CD4-positive, alpha-beta T cell (primary cell): ENCODE measurements at regions of chr13 and their contacts with region 1.

Region 1: DNA sequence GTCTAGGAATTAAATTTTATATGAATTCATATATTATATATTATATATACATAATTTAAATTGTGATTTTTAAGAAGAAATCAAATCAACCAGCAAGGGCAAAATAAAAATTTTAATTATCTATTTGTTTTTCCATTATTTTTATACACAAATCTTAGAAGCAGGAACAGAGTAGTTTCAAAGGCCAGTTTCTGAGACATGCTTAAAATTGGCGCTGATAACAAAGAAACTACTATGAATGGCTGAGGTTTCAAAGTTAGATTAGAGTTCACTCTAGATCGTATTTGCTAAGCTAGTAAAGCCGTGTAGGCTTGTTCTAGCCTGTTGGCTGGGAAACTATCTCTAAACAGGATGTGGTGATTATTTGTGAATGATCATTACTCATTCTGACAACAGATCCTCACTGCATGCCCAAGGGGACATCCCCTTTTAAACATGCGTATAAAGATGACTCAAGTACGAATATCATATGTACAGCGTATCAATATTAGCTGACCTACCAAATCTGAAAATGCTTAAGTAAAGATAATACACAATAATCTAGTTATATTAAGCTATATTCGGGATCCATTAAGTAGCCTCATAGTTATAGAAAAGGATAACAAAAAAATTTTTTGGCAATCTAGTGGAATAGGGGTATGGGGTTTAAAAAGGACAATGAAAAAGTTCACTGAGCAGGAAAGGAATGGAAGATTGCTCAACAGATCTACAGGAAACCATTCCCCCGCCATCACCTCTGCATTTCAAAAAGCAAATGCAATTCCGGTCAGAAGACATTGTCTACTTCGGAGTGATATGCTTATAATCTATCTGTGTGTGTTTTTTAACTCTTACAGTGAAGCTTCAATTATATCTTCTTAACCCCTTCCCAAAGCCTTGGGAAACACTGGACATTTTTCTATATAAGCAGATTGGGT is 150.1 kb downstream of the SHISA2 start:
- DNase-seq: peak in 8 of 14 experiments; percentile 16 to 90 (median 43)
- ATAC-seq: peak; percentile 91
- H3K4me3 ChIP-seq: no peak overlapping the region
- H3K4me3 Mint-ChIP-seq: peak overlapping the region; percentile 40
- H3K27ac ChIP-seq: peak overlapping the region in 1 of 2 donors; percentile 1
- H3K27ac Mint-ChIP-seq: no peak overlapping the region
- H3K4me1 ChIP-seq: peaks cover 62% of the 10 kb centered on the region
- H3K4me1 Mint-ChIP-seq: peaks cover 24% of the 10 kb centered on the region
- H3K27me3 ChIP-seq: no peaks in the 10 kb centered on the region
- H3K27me3 Mint-ChIP-seq: no peaks in the 10 kb centered on the region
- CTCF ChIP-seq: no peak

Region 2: DNA sequence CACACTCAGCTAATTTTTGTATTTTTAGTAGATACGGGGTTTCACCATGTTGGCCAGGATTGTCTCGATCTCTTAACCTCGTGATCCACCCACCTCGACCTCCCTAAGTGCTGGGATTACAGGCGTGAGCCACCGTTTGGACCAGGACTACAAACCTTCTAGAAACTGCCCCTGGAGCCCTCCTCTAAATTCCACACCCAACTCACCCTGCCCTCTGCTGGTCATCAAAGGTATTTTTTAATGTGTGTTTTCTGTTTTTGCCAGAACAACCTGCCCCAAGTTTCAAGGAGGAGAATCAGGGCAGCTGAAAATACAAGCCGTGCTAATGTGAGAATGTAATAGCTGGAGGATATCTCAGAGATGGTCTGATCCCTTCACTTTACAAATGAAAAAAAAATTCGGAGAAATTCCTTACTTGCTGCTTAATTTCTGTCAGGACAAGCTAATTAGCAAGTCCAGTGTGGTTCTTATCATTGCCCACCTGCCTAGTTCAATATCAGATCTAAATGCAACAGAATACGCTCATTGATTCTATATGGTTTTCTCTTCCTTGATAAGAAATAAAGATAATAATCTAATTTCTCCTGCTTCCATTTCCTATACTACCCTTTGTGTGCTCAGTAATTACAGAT is 525.9 kb before region 1 on chr13:
- CTCF ChIA-PET with region 1: no interaction called
- POLR2A ChIA-PET with region 1: no interaction called
- intact Hi-C with region 1: no loop called
- DNase-seq: peak in 10 of 14 experiments; percentile 1 to 65 (median 16)
- ATAC-seq: peak; percentile 48
- H3K4me3 ChIP-seq: no peak overlapping the region
- H3K4me3 Mint-ChIP-seq: no peak overlapping the region
- H3K27ac ChIP-seq: no peak overlapping the region
- H3K27ac Mint-ChIP-seq: no peak overlapping the region
- H3K4me1 ChIP-seq: peaks cover 6% of the 10 kb centered on the region
- H3K4me1 Mint-ChIP-seq: peaks cover 7% of the 10 kb centered on the region
- H3K27me3 ChIP-seq: peaks cover 37 to 38% of the 10 kb centered on the region in 2 experiments
- H3K27me3 Mint-ChIP-seq: peaks cover 58% of the 10 kb centered on the region
- CTCF ChIP-seq: peak; percentile 74

Region 3: GRCh38 chr13:25847145-25847544 is 54.6 kb before region 1 on chr13:
- CTCF ChIA-PET with region 1: no interaction called
- POLR2A ChIA-PET with region 1: interaction called, 6 read pairs
- intact Hi-C with region 1: loop called (anchors 5 to 10 kb)
- DNase-seq: peak in 4 of 14 experiments; percentile 22 to 78 (median 60)
- ATAC-seq: peak; percentile 76
- H3K4me3 ChIP-seq: peak overlapping the region; percentile 26
- H3K4me3 Mint-ChIP-seq: peak overlapping the region; percentile 46
- H3K27ac ChIP-seq: peak overlapping the region; percentile 25 to 52
- H3K27ac Mint-ChIP-seq: peak overlapping the region; percentile 83
- H3K4me1 ChIP-seq: peaks cover 21% of the 10 kb centered on the region
- H3K4me1 Mint-ChIP-seq: peaks cover 35% of the 10 kb centered on the region
- H3K27me3 ChIP-seq: no peaks in the 10 kb centered on the region
- H3K27me3 Mint-ChIP-seq: no peaks in the 10 kb centered on the region
- CTCF ChIP-seq: no peak

Region 4: DNA sequence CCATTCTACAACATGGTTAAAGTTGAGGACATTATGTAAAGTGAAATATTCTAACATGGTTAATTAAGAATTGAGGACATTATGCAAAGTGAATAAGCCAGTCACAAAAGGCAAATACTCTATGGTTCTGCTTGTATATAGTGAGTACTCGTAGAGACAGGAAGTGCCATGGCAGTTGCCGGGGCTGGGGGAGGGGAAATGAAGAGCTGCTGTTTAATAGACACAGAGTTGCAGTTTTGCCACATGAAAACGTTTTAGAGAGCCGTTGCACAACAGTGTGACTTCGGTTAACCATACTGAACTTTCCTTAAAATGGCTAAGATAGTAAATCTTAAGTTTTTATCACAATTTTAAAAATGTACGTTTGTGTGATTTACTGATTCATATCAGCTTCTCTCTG is 26.8 kb before region 1 on chr13:
- CTCF ChIA-PET with region 1: no interaction called
- POLR2A ChIA-PET with region 1: interaction called, 6 read pairs
- intact Hi-C with region 1: loop called in 1 of 2 experiments (anchors 2 kb)
- DNase-seq: peak; percentile 46 to 81 (median 66)
- ATAC-seq: peak; percentile 95
- H3K4me3 ChIP-seq: no peak overlapping the region
- H3K4me3 Mint-ChIP-seq: peak overlapping the region; percentile 22
- H3K27ac ChIP-seq: peak overlapping the region; percentile 31 to 47
- H3K27ac Mint-ChIP-seq: peak overlapping the region; percentile 78
- H3K4me1 ChIP-seq: peaks cover 39% of the 10 kb centered on the region
- H3K4me1 Mint-ChIP-seq: peaks cover 76% of the 10 kb centered on the region
- H3K27me3 ChIP-seq: no peaks in the 10 kb centered on the region
- H3K27me3 Mint-ChIP-seq: no peaks in the 10 kb centered on the region
- CTCF ChIP-seq: no peak

Region 5: GRCh38 chr13:25920277-25920676 is 18.6 kb after region 1 on chr13:
- CTCF ChIA-PET with region 1: no interaction called
- POLR2A ChIA-PET with region 1: no interaction called
- intact Hi-C with region 1: no loop called
- DNase-seq: no peak
- ATAC-seq: no peak
- H3K4me3 ChIP-seq: no peak overlapping the region
- H3K4me3 Mint-ChIP-seq: no peak overlapping the region
- H3K27ac ChIP-seq: no peak overlapping the region
- H3K27ac Mint-ChIP-seq: no peak overlapping the region
- H3K4me1 ChIP-seq: peaks cover 6% of the 10 kb centered on the region
- H3K4me1 Mint-ChIP-seq: peaks cover 6% of the 10 kb centered on the region
- H3K27me3 ChIP-seq: no peaks in the 10 kb centered on the region
- H3K27me3 Mint-ChIP-seq: no peaks in the 10 kb centered on the region
- CTCF ChIP-seq: no peak

Region 6: DNA sequence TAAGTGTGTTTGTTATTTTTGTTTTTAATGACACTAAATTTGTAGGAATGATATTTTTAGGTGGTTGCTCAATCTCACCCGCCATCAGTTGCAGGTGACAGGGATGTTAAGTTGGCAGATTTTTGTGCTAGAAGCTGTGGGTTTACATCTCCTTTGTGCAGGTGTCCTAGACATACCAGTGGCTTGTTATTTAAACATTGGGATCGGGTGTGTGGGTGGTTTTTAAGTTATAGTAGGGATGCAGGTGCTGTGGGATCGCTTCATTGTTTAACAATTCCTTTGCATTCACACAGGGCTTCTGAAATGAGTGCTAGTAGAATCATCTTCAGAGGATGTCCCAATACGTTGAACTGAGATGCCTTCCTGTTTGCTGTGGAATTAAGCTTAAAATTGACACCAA is 50.1 kb after region 1 on chr13:
- CTCF ChIA-PET with region 1: no interaction called
- POLR2A ChIA-PET with region 1: no interaction called
- intact Hi-C with region 1: loop called in 1 of 2 experiments (anchors 5 kb)
- DNase-seq: no peak
- ATAC-seq: no peak
- H3K4me3 ChIP-seq: no peak overlapping the region
- H3K4me3 Mint-ChIP-seq: no peak overlapping the region
- H3K27ac ChIP-seq: no peak overlapping the region
- H3K27ac Mint-ChIP-seq: no peak overlapping the region
- H3K4me1 ChIP-seq: peaks cover 13% of the 10 kb centered on the region
- H3K4me1 Mint-ChIP-seq: peaks cover 11% of the 10 kb centered on the region
- H3K27me3 ChIP-seq: no peaks in the 10 kb centered on the region
- H3K27me3 Mint-ChIP-seq: no peaks in the 10 kb centered on the region
- CTCF ChIP-seq: no peak

Region 7: DNA sequence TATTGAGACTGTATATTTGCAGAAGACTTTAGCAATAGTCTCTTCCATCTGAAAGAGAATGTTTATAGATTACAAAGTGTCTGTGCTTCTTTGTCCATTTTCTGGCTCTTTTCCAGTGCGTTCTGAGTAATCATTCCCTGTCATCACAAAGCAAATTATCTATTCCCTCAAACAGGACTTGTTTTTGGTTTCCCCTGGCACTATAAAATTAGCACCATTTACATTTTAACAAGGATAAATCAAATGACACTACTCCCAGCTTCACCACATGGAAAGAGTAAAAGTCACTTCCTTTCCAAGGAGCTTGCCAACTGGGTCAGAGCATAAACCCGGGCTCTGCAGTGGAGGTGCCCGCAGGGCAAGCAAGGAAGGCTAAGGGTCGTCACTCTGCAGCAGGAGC is 62.0 kb after region 1 on chr13:
- CTCF ChIA-PET with region 1: no interaction called
- POLR2A ChIA-PET with region 1: no interaction called
- intact Hi-C with region 1: no loop called
- DNase-seq: no peak
- ATAC-seq: no peak
- H3K4me3 ChIP-seq: no peak overlapping the region
- H3K4me3 Mint-ChIP-seq: no peak overlapping the region
- H3K27ac ChIP-seq: no peak overlapping the region
- H3K27ac Mint-ChIP-seq: no peak overlapping the region
- H3K4me1 ChIP-seq: peaks cover 14% of the 10 kb centered on the region
- H3K4me1 Mint-ChIP-seq: peaks cover 14% of the 10 kb centered on the region
- H3K27me3 ChIP-seq: no peaks in the 10 kb centered on the region
- H3K27me3 Mint-ChIP-seq: no peaks in the 10 kb centered on the region
- CTCF ChIP-seq: no peak

Region 8: DNA sequence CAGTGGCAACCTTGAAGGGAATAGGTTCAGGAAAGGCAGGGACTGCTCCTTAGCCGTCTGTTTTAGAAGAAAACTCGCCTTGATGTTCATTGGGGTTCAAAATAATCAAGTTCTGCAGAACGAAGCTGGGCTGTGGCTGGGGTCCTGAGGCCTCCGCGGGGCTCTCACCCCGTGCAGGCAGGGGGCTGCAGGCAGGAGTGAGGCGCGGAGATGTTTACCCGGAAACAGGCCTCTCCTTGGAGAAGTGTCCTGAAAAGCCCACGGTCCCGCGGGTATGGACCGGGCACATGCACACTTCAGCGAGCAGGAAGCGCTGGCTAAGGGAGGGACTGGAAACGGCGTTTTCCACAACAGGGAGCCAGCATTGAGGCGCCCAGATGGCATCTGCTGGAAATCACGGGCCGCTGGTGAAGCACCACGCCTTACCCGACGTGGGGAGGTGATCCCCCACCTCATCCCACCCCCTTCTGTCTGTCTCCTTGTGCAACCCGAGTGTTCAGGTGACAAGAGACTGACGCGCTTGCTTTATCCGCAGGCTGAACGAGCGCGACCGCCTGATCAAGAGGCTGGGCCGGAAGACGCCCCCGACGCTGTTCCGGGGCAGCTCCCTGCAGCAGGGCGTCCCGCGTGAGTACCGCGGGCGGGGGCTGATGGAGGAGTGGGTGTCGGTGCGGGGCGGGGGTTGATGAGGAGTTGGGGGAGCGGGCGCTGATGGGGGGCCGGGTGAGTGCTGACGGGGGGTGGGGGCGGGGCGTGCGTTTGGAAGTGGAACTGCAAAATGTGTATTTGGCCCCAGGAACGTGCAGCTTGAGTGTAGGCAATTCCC is 110.5 kb after region 1 on chr13:
- CTCF ChIA-PET with region 1: no interaction called
- POLR2A ChIA-PET with region 1: no interaction called
- intact Hi-C with region 1: loop called in 1 of 2 experiments (anchors 10 kb)
- DNase-seq: peak; percentile 47 to 85 (median 60)
- ATAC-seq: peak; percentile 95
- H3K4me3 ChIP-seq: peak overlapping the region; percentile 57
- H3K4me3 Mint-ChIP-seq: peak overlapping the region; percentile 85
- H3K27ac ChIP-seq: peak overlapping the region; percentile 46 to 74
- H3K27ac Mint-ChIP-seq: peak overlapping the region; percentile 91
- H3K4me1 ChIP-seq: peaks cover 17% of the 10 kb centered on the region
- H3K4me1 Mint-ChIP-seq: peaks cover 14% of the 10 kb centered on the region
- H3K27me3 ChIP-seq: no peaks in the 10 kb centered on the region
- H3K27me3 Mint-ChIP-seq: no peaks in the 10 kb centered on the region
- CTCF ChIP-seq: no peak

Region 9: GRCh38 chr13:26221721-26222519 is 320.2 kb after region 1 on chr13 and contains the start of gene RNF6:
- CTCF ChIA-PET with region 1: no interaction called
- POLR2A ChIA-PET with region 1: no interaction called
- intact Hi-C with region 1: no loop called
- DNase-seq: peak; percentile 75 to 96 (median 84)
- ATAC-seq: peak; percentile 94
- H3K4me3 ChIP-seq: peak within 1 kb of the TSS; percentile 84
- H3K4me3 Mint-ChIP-seq: peak within 1 kb of the TSS; percentile 99
- H3K27ac ChIP-seq: peak within 1 kb of the TSS; percentile 96
- H3K27ac Mint-ChIP-seq: peak within 1 kb of the TSS; percentile 89
- H3K4me1 ChIP-seq: peaks cover 17% of the 10 kb centered on the region
- H3K4me1 Mint-ChIP-seq: peaks cover 46% of the 10 kb centered on the region
- H3K27me3 ChIP-seq: no peaks in the 10 kb centered on the region
- H3K27me3 Mint-ChIP-seq: no peaks in the 10 kb centered on the region
- CTCF ChIP-seq: no peak
- total RNA-seq, gene RNF6: 46.5 to 49.5 TPM